ENCODE measurements at regions of chr16 and their contacts with region 1.

Region 1: GRCh38 chr16:29805378-29806098 is 791 bp upstream of the MAZ start:
- DNase-seq: peak; percentile 96

Region 2: GRCh38 chr16:29790183-29790952 is 15.2 kb before region 1 on chr16 and contains the start of gene KIF22:
- CTCF ChIA-PET with region 1: interaction called, 4 read pairs
- POLR2A ChIA-PET with region 1: interaction called, 92 read pairs
- DNase-seq: peak; percentile 99

Region 3: DNA sequence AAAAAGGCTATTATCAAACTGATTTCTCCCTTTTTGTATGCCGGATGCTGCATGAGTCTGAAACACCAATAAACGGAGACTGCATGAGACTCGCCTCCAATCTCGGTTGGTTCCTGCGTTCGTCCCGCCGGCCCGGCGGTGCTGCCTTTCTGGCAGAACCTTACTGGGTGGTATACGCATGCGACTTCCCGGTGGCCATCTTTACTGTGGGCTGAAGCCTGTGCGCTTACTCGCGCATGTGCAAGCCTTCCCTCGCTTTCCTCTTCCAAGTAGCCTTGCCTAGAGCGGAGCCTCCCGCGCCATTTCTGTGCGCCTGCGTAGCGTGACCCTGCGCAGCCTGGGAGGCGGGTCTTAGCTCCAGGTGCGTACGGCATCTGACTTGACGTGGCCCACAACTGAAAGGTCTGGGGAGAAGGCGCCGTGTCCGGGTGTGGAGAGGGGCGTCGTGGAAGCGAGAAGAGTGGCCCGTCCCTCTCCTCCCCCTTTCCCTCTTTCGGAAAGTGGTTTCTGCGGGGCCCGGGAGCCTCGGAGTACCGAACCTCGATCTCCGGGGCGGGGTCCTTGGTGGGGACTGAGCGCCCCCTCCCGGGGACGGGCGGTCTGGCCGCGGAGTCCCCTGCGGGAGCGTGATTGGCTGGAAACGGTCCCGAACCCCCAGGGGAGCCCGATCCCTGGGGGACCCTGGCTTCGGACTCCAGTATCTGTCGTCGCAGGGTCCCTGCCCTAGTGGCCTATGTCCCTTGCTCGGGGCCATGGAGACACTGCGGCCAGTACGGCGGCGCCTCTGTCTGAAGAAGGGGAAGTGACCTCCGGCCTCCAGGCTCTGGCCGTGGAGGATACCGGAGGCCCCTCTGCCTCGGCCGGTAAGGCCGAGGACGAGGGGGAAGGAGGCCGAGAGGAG is 10.5 kb after region 1 on chr16 and contains the start of gene PAGR1:
- CTCF ChIA-PET with region 1: interaction called, 27 read pairs
- POLR2A ChIA-PET with region 1: interaction called, 176 read pairs
- DNase-seq: peak; percentile 99

Region 4: DNA sequence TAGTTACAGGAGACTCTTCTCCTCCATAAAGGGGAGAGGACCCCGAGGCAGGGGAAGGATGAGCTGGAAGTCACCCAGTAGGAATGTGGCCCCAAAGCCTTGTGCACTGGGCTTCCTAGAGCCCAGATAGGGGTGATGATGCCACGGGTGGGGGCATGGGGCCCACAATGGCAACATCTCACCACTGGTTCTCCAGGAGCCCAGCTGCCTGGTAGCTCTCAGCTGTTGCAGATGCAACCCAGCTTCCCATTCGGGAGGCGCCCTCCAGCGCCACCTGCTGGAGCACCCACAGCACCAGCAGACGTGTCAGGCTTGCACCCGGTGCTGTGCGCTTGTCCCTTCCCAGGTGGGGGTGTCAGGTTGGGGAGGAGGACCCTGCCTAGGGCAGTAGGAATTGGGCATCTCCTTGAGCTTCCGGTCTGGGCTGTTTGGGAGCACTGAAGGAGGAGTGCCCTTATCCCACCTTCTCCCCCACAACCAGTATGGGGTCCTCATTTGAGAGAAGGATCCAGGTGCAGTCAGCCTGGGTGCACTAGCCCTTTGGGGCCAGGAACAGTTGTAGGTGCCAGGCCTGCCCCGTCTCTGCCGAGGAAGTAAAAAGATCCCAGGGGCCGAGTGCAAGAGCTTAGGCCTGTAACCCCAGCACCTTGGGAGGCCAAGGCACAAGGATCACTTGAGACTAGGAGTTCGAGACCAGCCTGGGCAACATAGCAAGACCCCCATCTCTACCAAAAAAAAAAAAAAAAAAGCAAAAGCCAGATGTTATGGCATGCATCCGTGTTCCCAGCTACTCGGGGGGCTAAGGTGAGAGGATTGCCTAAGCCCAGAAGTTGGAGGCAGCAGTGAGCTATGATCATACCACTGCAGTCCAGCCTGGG is 43.1 kb after region 1 on chr16:
- CTCF ChIA-PET with region 1: interaction called, 10 read pairs
- POLR2A ChIA-PET with region 1: interaction called, 22 read pairs
- DNase-seq: peak; percentile 93

Region 5: GRCh38 chr16:29973384-29974246 is 168.1 kb after region 1 on chr16 and contains the start of gene TAOK2:
- CTCF ChIA-PET with region 1: no interaction called
- POLR2A ChIA-PET with region 1: interaction called, 10 read pairs
- DNase-seq: peak; percentile 100

Region 6: GRCh38 chr16:30018731-30019158 is 213.2 kb after region 1 on chr16:
- CTCF ChIA-PET with region 1: no interaction called
- POLR2A ChIA-PET with region 1: interaction called, 10 read pairs
- DNase-seq: no peak

Region 7: GRCh38 chr16:30984669-30985400 is 1179.3 kb after region 1 on chr16 and contains the start of gene HSD3B7:
- CTCF ChIA-PET with region 1: interaction called, 4 read pairs
- POLR2A ChIA-PET with region 1: interaction called, 11 read pairs
- DNase-seq: peak; percentile 100